ENCODE measurements at regions of chr3 and their contacts with region 1.

Region 1: GRCh38 chr3:25648107-25648535 is 16.6 kb downstream of the TOP2B start:
- DNase-seq: peak; percentile 91
- H3K4me3 Mint-ChIP-seq: no peak overlapping the region
- H3K27ac Mint-ChIP-seq: no peak overlapping the region
- H3K4me1 Mint-ChIP-seq: peaks cover 52% of the 10 kb centered on the region
- H3K27me3 Mint-ChIP-seq: no peaks in the 10 kb centered on the region

Region 2: DNA sequence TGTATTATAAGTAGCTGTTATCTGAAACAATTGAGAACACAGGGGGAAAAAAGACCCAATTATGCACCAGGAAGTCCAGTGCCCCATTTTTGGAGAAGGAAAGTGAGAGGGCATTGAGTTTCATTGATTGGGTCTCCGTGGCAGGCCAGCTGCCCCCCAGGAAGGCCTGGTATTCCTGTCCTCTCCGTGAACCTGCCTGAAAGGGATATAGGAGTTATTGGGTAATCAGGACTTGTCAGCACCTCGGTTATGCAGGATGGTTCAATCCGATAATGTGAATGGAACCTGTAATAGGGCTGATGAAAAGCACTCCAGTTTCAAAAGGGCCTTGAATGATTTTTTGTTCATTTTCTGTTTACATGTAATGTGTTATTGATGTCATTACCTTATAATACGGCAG is 342.1 kb before region 1 on chr3:
- CTCF ChIA-PET with region 1: no interaction called
- intact Hi-C with region 1: no loop called
- DNase-seq: no peak
- H3K4me3 Mint-ChIP-seq: no peak overlapping the region
- H3K27ac Mint-ChIP-seq: no peak overlapping the region
- H3K4me1 Mint-ChIP-seq: no peaks in the 10 kb centered on the region
- H3K27me3 Mint-ChIP-seq: no peaks in the 10 kb centered on the region

Region 3: DNA sequence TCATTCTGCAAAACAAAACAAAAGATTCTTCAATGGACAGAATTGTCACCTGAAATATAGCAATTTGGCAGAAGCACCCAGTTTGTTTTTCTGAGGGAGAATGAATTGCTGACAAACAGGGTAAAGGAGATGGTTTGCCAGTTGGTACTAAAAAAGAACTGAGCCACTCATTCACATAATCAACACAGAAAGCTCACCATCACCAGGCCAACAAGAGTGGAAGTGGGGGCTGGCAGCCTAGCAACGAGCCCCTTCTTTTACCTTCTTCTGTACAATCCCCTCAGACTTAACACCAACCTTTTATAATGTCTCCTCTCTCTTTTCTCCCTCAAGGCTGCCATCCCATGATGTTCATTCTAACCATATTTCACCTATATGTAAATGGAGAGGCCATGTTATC is 10.7 kb after region 1 on chr3:
- CTCF ChIA-PET with region 1: interaction called, 18 read pairs
- intact Hi-C with region 1: no loop called
- DNase-seq: no peak
- H3K4me3 Mint-ChIP-seq: no peak overlapping the region
- H3K27ac Mint-ChIP-seq: no peak overlapping the region
- H3K4me1 Mint-ChIP-seq: peaks cover 71% of the 10 kb centered on the region
- H3K27me3 Mint-ChIP-seq: no peaks in the 10 kb centered on the region

Region 4: DNA sequence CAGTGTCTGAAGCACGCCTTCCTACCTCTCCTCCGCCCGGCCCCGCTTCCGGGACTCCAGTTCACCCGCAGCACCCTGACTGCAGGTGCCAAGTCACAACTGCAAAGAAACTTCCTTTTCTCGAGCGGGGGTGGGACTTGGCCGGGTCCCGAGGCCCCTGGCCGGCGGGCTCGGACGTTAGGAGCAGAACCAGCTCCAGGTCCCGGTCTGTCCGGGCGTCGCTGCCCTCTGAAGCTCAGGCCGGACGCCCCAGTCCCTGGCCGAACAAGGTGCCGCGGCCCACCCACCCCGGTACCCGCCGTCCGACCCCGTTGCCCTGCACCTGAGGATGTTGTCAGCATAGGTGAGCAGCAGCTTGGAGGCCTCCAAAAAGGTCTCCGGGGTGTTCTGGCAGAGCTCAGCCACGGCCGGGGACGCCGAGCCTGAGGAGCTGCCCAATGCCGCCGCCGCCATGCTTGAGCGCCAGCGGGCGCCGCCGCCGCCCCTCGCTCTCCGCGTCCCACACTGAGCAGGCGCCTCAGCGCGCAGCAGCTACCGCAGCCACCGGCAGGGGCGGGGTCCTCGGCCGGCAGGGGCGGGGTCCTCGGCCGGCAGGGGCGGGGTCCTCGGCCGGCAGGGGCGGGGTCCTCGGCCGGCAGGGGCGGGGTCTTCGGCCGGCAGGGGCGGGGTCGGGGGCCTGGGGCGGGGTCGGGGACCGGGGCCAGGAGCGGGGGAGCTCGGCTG is 135.0 kb after region 1 on chr3 and contains the start of gene NGLY1:
- CTCF ChIA-PET with region 1: interaction called, 6 read pairs
- intact Hi-C with region 1: loop called (anchors 5 kb)
- DNase-seq: peak; percentile 87
- H3K4me3 Mint-ChIP-seq: peak within 1 kb of the TSS; percentile 88
- H3K27ac Mint-ChIP-seq: peak within 1 kb of the TSS; percentile 88
- H3K4me1 Mint-ChIP-seq: peaks cover 40% of the 10 kb centered on the region
- H3K27me3 Mint-ChIP-seq: no peaks in the 10 kb centered on the region
- total RNA-seq, gene NGLY1: 49.0 to 50.0 TPM

Region 5: DNA sequence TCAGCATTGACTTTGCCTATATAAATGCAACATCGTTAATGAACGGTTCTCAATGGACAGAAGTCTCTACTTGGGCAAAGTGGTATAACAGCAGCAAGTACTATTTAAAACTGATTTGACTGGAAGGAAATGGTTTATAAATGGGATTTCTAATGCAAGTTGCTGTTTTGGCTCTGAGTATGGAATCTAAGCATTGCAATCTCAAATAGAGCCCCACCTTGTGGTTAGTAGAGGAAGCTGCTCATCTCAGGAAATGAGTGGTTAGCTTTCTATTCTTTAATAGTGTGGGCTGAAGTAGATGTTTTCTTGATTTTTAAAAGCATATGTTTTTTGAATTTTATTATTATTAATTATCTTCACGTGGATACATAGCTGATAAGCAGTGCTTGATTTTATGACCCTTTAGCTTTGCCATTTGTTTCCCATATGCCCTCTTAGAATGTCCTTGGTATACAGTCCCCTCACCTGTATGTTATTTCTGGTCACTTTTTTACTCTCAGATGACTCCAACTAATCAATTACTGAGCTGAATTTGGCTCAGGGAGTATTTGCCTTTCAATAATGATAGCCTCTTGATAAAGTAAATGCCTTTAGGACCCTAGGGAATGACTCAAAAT is 208.9 kb after region 1 on chr3:
- CTCF ChIA-PET with region 1: interaction called, 99 read pairs
- intact Hi-C with region 1: loop called (anchors 1 kb)
- DNase-seq: peak; percentile 27
- H3K4me3 Mint-ChIP-seq: no peak overlapping the region
- H3K27ac Mint-ChIP-seq: no peak overlapping the region
- H3K4me1 Mint-ChIP-seq: peaks cover 2% of the 10 kb centered on the region
- H3K27me3 Mint-ChIP-seq: no peaks in the 10 kb centered on the region

Region 6: GRCh38 chr3:26118165-26118564 is 470.0 kb after region 1 on chr3:
- CTCF ChIA-PET with region 1: no interaction called
- intact Hi-C with region 1: loop called (anchors 10 kb)
- DNase-seq: no peak
- H3K4me3 Mint-ChIP-seq: no peak overlapping the region
- H3K27ac Mint-ChIP-seq: no peak overlapping the region
- H3K4me1 Mint-ChIP-seq: no peaks in the 10 kb centered on the region
- H3K27me3 Mint-ChIP-seq: no peaks in the 10 kb centered on the region

Region 7: DNA sequence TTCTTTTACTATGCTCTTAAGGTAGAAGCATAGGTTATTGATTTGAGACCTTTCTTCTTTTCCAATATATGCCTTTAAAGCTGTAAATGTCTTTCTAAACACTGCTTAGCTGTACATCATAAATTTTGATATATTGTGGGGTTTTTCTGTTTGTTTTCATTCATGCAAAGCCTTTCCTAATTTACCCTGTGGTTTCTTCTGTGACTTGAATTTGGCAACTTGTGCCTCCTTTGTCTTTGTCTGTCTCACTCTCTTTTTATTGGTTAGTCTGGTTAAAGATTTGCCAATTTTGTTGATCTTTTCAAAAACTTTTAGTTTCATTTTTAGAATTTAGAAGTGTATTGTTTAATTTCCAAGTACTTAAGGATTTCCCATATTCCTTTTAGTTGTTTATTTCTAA is 484.8 kb after region 1 on chr3:
- CTCF ChIA-PET with region 1: no interaction called
- intact Hi-C with region 1: no loop called
- DNase-seq: no peak
- H3K4me3 Mint-ChIP-seq: no peak overlapping the region
- H3K27ac Mint-ChIP-seq: no peak overlapping the region
- H3K4me1 Mint-ChIP-seq: no peaks in the 10 kb centered on the region
- H3K27me3 Mint-ChIP-seq: no peaks in the 10 kb centered on the region

Region 8: DNA sequence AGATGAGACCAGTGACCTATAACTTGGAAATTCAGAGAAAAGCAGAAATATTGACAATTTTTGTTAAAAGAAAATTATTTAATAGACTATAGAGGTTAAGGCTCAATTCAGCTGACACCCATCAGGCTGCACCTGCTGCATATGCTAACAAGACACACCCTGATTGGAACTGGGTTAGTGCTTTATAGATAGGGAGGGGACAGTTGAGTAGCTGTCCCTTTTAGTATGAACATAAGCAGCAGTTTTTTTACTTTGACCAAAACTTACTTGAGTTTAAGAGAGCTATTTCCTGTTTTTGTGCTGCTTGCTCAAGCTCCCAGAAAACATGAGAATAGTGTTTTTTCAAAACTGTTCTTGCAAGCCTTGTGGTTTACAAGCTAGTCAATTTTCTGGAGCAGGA is 1267.1 kb after region 1 on chr3:
- CTCF ChIA-PET with region 1: no interaction called
- intact Hi-C with region 1: no loop called
- DNase-seq: no peak
- H3K4me3 Mint-ChIP-seq: no peak overlapping the region
- H3K27ac Mint-ChIP-seq: no peak overlapping the region
- H3K4me1 Mint-ChIP-seq: no peaks in the 10 kb centered on the region
- H3K27me3 Mint-ChIP-seq: no peaks in the 10 kb centered on the region

Measured in activated naive CD4-positive, alpha-beta T cell treated with anti-CD3 and anti-CD28 coated beads for 36 hours (primary cell).